ENCODE measurements at regions of chr18 and their contacts with region 1.

Region 1: GRCh38 chr18:25253136-25253535 is 98.8 kb downstream of the ZNF521 start:
- DNase-seq: no peak
- H3K4me3 ChIP-seq: no peak overlapping the region
- H3K27ac ChIP-seq: no peak overlapping the region
- H3K4me1 ChIP-seq: no peaks in the 10 kb centered on the region
- H3K27me3 ChIP-seq: no peaks in the 10 kb centered on the region
- CTCF ChIP-seq: no peak
- EP300 ChIP-seq: no peak
- POLR2A ChIP-seq: no peak

Region 2: DNA sequence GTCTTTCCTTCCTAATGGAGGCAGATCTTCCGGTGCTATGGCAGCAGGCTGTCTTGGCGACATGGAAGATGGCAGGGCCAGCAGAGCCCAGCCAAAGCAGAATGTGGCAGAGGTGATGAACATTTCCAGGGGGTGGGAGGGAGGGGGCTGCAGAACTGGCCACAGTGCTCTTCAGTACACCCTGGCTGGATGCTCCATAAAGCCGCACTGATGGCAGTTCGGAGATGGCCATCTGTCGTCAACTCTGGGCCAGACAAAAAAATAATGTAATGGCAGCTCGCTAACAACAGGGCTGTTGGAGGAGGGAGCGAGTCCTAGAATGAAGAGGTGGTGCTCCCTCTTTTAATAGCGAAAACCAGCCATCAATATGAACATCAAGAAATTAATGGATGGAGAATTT is 172.1 kb before region 1 on chr18:
- intact Hi-C with region 1: loop called (anchors 10 kb)
- DNase-seq: no peak
- H3K4me3 ChIP-seq: no peak overlapping the region
- H3K27ac ChIP-seq: no peak overlapping the region
- H3K4me1 ChIP-seq: peaks cover 0 to 21% (median 17%) of the 10 kb centered on the region in 4 donors
- H3K27me3 ChIP-seq: no peaks in the 10 kb centered on the region
- CTCF ChIP-seq: no peak
- EP300 ChIP-seq: no peak
- POLR2A ChIP-seq: no peak

Region 3: DNA sequence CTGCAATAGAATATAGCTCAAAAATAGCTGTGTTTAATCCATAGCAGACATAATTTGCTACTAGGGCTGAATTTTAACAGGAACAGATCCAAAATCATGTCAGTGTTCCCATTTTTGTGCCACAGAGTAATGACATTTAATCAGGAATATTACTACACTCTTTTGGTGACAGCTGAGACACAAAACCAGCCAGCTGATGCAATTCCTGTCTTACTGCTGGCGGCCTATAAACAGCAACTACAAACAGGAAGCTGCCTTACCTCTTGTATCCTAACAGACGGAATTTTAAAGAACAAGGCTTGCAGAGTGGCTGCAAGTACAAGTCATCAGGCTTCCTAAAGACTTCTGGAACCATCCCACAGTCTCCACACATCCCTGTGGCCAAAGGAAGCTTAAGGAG is 119.3 kb before region 1 on chr18:
- intact Hi-C with region 1: no loop called
- DNase-seq: no peak
- H3K4me3 ChIP-seq: no peak overlapping the region
- H3K27ac ChIP-seq: no peak overlapping the region
- H3K4me1 ChIP-seq: peaks cover 0 to 10% (median 4%) of the 10 kb centered on the region in 4 donors
- H3K27me3 ChIP-seq: no peaks in the 10 kb centered on the region
- CTCF ChIP-seq: no peak
- EP300 ChIP-seq: no peak
- POLR2A ChIP-seq: no peak

Region 4: GRCh38 chr18:25561918-25562317 is 308.8 kb after region 1 on chr18:
- intact Hi-C with region 1: no loop called
- DNase-seq: no peak
- H3K4me3 ChIP-seq: no peak overlapping the region
- H3K27ac ChIP-seq: no peak overlapping the region
- H3K4me1 ChIP-seq: peaks cover 0 to 18% (median 8%) of the 10 kb centered on the region in 4 donors
- H3K27me3 ChIP-seq: no peaks in the 10 kb centered on the region
- CTCF ChIP-seq: no peak
- EP300 ChIP-seq: no peak
- POLR2A ChIP-seq: no peak

Measured in sigmoid colon (tissue), 7 donors.